ENCODE measurements at regions of chr17 and their contacts with region 1.

Region 1: GRCh38 chr17:7336240-7337175 is at the start of gene ACAP1:
- DNase-seq: peak; percentile 74 to 93 (median 82)
- ATAC-seq: peak; percentile 94
- H3K4me3 Mint-ChIP-seq: peak within 1 kb of the TSS; percentile 92 to 98 (median 95)
- H3K27ac Mint-ChIP-seq: peak within 1 kb of the TSS; percentile 77 to 99 (median 98)
- H3K4me1 Mint-ChIP-seq: peaks cover 26 to 69% (median 64%) of the 10 kb centered on the region in 4 donors
- H3K27me3 Mint-ChIP-seq: no peaks in the 10 kb centered on the region
- polyA plus RNA-seq, gene ACAP1: 246 to 295 (median 283) TPM

Region 2: DNA sequence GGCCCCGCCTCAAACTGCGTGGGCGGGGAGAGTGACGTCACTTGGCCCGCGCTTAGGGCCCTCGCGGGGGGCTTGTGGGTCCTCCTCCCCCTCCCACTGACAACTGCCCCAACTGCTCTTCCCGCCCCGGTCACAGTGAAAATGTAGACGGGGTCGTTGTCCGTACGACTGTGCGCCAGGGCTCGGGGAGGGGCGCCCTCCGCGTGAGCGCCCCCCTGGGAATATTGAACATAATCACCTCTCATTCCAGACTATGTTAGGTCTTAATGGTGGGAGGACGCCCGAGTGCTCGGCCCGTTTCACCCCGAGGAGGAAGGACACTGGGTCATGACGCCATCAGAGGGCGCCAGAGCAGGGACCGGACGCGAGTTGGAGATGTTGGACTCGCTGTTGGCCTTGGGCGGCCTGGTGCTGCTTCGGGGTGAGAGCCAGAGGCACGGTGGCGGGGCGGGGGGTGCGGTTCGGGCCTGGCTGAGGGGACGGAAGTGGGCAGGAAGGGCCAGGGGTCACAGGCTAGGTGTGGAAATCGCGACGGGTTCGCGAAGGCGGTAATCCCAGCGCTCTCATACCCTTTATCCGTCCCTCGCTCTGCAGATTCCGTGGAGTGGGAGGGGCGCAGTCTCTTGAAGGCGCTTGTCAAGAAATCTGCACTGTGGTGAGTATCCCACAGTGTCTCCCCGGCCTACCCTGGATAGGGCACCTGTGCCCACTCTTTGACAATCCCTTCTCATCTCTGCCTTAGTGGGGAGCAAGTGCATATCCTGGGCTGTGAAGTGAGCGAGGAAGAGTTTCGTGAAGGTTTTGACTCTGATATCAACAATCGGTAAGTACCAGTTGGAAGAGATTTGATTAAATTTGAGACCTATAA is 84.1 kb before region 1 on chr17 and contains the start of gene ELP5:
- POLR2A ChIA-PET with region 1: no interaction called
- DNase-seq: peak in 8 of 10 donors; percentile 71 to 99 (median 82)
- ATAC-seq: peak; percentile 57 to 63
- H3K4me3 Mint-ChIP-seq: peak within 1 kb of the TSS; percentile 91 to 98 (median 95)
- H3K27ac Mint-ChIP-seq: peak within 1 kb of the TSS; percentile 90 to 100 (median 100)
- H3K4me1 Mint-ChIP-seq: peaks cover 22 to 51% (median 46%) of the 10 kb centered on the region in 4 donors
- H3K27me3 Mint-ChIP-seq: no peaks in the 10 kb centered on the region
- polyA plus RNA-seq, gene ELP5: 55.5 to 94.0 (median 70.8) TPM

Region 3: DNA sequence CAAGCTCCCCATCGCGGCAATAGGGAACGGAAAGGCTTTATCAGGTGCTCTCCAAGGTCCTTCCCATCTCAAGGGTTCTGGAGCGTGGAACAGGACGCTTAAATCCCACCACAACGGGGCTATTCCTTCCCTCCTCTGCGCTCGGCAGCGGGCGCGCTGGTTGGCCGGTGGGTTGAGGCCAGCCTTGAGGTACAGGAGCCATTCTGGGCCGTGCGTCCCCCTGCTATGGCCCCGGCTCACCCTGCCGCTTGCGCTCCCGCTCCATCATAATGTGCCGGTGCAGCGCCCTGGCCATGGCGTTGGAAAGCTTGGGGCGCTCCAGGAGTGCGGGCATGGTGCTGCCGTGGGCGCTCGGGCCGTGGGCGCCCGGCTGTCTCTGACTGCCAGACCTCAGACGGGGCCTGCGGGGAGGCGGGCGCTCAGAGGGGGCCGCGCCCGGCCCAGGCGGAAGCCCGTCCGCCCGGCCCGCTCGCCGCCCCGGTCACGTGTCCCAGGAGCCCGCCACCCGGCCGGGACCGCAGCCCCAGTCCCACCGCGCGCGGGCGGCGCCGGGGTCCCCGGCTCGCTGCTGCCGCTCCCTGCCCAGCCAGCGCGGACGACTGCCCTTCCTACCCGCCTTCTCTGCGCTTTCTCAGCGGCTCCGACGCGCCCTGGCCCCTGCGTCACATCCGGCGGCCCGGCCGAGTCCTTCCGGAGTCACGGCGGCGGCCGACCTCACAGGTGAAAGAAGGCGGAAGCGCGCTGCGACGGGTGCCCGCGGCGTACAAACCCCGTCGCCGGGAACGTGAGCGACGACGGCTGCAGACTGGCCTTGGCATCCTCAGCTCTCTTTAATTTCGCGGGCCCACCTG is 21.6 kb before region 1 on chr17 and contains the start of gene GPS2:
- POLR2A ChIA-PET with region 1: interaction called, 168 read pairs
- DNase-seq: peak; percentile 88 to 95 (median 92)
- ATAC-seq: peak; percentile 83 to 89
- H3K4me3 Mint-ChIP-seq: peak within 1 kb of the TSS; percentile 81 to 97 (median 91)
- H3K27ac Mint-ChIP-seq: peak within 1 kb of the TSS; percentile 88 to 98 (median 96)
- H3K4me1 Mint-ChIP-seq: peaks cover 29 to 65% (median 53%) of the 10 kb centered on the region in 4 donors
- H3K27me3 Mint-ChIP-seq: no peaks in the 10 kb centered on the region
- polyA plus RNA-seq, gene GPS2: 75.7 to 107 (median 98.6) TPM

Region 4: GRCh38 chr17:7323731-7324437 is 12.6 kb before region 1 on chr17:
- POLR2A ChIA-PET with region 1: interaction called, 168 read pairs
- DNase-seq: peak in 9 of 10 donors; percentile 34 to 77 (median 62)
- ATAC-seq: peak; percentile 41 to 53
- H3K4me3 Mint-ChIP-seq: no peak overlapping the region
- H3K27ac Mint-ChIP-seq: peak overlapping the region in 4 of 10 donors; percentile 31 to 65 (median 50)
- H3K4me1 Mint-ChIP-seq: peaks cover 17 to 31% (median 19%) of the 10 kb centered on the region in 4 donors
- H3K27me3 Mint-ChIP-seq: no peaks in the 10 kb centered on the region

Region 5: DNA sequence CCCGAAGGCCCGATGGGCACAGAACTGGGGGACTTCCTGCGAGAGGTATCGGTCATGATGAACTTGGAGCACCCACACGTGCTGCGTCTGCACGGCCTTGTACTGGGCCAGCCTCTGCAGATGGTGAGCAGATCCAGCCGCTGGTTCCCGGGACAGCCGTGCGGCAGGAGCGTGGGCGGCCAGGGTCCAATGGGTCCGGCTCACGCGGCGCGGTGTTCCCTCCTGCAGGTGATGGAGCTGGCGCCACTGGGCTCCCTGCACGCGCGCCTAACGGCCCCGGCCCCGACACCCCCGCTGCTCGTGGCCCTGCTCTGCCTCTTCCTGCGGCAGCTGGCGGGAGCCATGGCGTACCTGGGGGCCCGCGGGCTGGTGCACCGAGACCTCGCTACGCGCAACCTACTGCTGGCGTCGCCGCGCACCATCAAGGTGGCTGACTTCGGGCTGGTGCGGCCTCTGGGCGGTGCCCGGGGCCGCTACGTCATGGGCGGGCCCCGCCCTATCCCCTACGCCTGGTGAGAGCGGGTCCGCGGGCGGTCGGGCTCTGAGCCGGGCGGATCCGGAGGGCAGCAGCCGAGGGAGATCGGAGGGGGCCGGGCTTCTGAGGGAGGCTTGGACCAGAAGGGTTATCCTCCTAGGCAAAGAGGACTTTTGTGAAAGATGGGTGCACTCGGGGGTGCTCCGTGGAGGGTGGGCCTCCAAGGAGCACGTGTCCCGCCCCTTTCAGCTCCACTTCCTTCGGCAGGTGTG is 47.4 kb after region 1 on chr17:
- POLR2A ChIA-PET with region 1: interaction called, 11 read pairs
- DNase-seq: peak; percentile 65 to 93 (median 82)
- ATAC-seq: peak; percentile 95
- H3K4me3 Mint-ChIP-seq: peak overlapping the region; percentile 77 to 94 (median 86)
- H3K27ac Mint-ChIP-seq: peak overlapping the region; percentile 48 to 97 (median 96)
- H3K4me1 Mint-ChIP-seq: peaks cover 15 to 42% (median 24%) of the 10 kb centered on the region in 4 donors
- H3K27me3 Mint-ChIP-seq: peaks cover 14 to 33% (median 29%) of the 10 kb centered on the region in 5 donors

Region 6: DNA sequence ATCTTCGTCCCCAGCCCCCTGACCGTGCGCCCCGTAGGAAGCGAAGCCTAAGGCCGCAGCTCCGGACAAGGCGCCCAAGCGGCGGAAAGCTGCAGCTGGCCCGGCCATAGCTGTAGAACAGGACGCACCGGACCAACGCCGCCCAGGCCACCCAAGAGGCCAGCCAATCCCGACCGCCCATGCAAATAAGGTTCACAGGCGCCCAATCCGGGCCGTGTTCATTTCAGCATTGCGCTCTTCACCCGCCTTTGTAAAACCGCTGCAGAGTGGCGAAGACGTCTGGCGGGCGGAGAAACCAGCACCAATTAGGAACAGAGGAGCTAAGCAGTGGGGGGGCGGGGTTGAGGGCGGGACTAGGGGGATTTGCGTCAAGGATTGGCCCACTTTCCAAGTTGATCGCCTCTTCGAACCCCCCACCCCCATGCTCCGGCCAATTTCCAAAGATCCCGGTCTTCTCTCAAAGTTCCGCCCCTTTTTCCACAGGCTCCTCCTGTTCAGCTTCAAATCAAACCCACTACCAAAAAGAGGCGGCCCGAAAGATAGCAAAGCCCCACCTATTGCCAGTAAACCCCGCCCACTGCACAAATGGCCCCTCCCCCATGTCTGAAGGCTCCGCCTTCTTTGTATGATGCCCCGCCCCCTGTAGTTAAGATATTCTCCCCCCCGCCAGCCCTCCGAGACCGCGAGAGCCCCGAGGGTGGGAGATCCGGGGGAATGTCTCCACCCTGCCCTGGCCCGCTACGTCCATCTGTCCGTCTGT is 67.6 kb after region 1 on chr17 and contains the start of gene TMEM256:
- POLR2A ChIA-PET with region 1: interaction called, 11 read pairs
- DNase-seq: peak; percentile 89 to 97 (median 93)
- ATAC-seq: peak; percentile 87 to 91
- H3K4me3 Mint-ChIP-seq: peak within 1 kb of the TSS; percentile 92 to 98 (median 96)
- H3K27ac Mint-ChIP-seq: peak within 1 kb of the TSS; percentile 89 to 99 (median 98)
- H3K4me1 Mint-ChIP-seq: peaks cover 15 to 35% (median 28%) of the 10 kb centered on the region in 4 donors
- H3K27me3 Mint-ChIP-seq: peaks cover 0 to 4% (median 0%) of the 10 kb centered on the region in 5 donors
- polyA plus RNA-seq, gene TMEM256: 62.6 to 96.5 (median 81.4) TPM

Measured in naive thymus-derived CD8-positive, alpha-beta T cell (primary cell).